Astrocyte of the cerebellum (primary cell): ENCODE measurements at regions of chr3 and their contacts with region 1.

Region 1: GRCh38 chr3:124935264-124935663 is 713 bp upstream of the MUC13 start:
- DNase-seq: no peak
- H3K4me3 ChIP-seq: no peak overlapping the region
- CTCF ChIP-seq: no peak

Region 2: GRCh38 chr3:125437631-125438435 is 502.6 kb after region 1 on chr3:
- in situ Hi-C with region 1: loop called (anchors 10 kb)
- DNase-seq: peak; percentile 19
- H3K4me3 ChIP-seq: no peak overlapping the region
- CTCF ChIP-seq: peak; percentile 97